ENCODE measurements at regions of chr11 and their contacts with region 1.

Region 1: GRCh38 chr11:111932611-111932950 is 4.6 kb upstream of the DIXDC1 start:
- DNase-seq: no peak
- H3K4me3 ChIP-seq: no peak overlapping the region
- H3K4me3 Mint-ChIP-seq: peak overlapping the region in 4 of 7 donors; percentile 4 to 63 (median 36)
- H3K27ac ChIP-seq: no peak overlapping the region
- H3K27ac Mint-ChIP-seq: peak overlapping the region in 1 of 8 donors; percentile 29
- H3K4me1 ChIP-seq: peaks cover 22% of the 10 kb centered on the region
- H3K4me1 Mint-ChIP-seq: peaks cover 9 to 25% (median 21%) of the 10 kb centered on the region in 3 donors
- H3K27me3 ChIP-seq: no peaks in the 10 kb centered on the region
- H3K27me3 Mint-ChIP-seq: peaks cover 6% of the 10 kb centered on the region in 2 donors

Region 2: DNA sequence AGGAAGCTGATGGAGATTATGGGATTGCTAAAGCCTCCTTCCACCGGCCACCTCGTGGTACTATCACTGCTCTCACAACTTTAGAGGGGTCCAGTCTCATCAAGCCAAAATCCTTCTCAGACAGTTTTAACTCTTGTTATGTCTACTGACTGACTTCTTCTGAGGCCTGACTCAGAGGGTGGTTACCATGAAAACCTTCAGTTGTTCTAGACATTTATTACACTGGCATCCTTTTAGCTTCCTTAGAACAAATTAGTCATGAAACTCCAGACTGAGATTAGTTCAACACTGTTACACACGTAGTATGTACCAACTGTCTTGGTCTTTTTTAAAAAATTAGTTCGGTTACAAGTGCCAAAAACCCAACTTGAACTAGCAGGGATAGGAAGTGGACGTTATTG is 12.1 kb after region 1 on chr11:
- CTCF ChIA-PET with region 1: interaction called, 18 read pairs
- POLR2A ChIA-PET with region 1: interaction called, 6 read pairs
- DNase-seq: no peak
- H3K4me3 ChIP-seq: no peak overlapping the region
- H3K4me3 Mint-ChIP-seq: no peak overlapping the region
- H3K27ac ChIP-seq: no peak overlapping the region
- H3K27ac Mint-ChIP-seq: no peak overlapping the region
- H3K4me1 ChIP-seq: no peaks in the 10 kb centered on the region
- H3K4me1 Mint-ChIP-seq: peaks cover 0 to 3% (median 0%) of the 10 kb centered on the region in 3 donors
- H3K27me3 ChIP-seq: no peaks in the 10 kb centered on the region
- H3K27me3 Mint-ChIP-seq: no peaks in the 10 kb centered on the region

Region 3: DNA sequence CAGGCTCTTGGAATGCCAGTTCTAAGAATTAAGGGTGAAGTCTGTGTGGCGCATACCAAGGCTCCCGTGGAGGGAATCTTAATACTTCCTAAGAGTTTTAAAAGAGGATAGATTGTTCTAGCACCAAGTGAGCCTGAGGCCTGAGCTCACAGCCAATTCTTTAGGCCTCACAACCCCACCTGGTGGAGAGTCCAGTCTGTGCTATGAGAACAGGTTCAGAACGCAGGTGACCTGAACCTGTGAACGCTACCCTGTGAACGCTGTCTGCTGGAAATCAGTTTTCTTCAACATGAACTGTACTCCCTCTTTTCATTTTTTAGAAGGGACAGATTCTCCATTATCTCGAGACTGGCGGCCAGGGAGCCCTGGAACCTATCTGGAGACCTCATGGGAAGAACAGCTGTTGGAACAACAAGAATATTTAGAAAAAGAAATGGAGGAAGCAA is 49.5 kb after region 1 on chr11:
- CTCF ChIA-PET with region 1: interaction called, 31 read pairs
- POLR2A ChIA-PET with region 1: no interaction called
- DNase-seq: peak in 4 of 5 donors; percentile 10 to 62 (median 36)
- H3K4me3 ChIP-seq: no peak overlapping the region
- H3K4me3 Mint-ChIP-seq: no peak overlapping the region
- H3K27ac ChIP-seq: no peak overlapping the region
- H3K27ac Mint-ChIP-seq: peak overlapping the region in 1 of 8 donors; percentile 23
- H3K4me1 ChIP-seq: peaks cover 5% of the 10 kb centered on the region
- H3K4me1 Mint-ChIP-seq: peaks cover 7 to 8% (median 7%) of the 10 kb centered on the region in 3 donors
- H3K27me3 ChIP-seq: peaks cover 6% of the 10 kb centered on the region
- H3K27me3 Mint-ChIP-seq: peaks cover 15 to 24% of the 10 kb centered on the region in 2 donors

Measured in CD8-positive, alpha-beta memory T cell (primary cell).